SK-N-SH (cell line): ENCODE measurements at regions of chr3 and their contacts with region 1.

Region 1: GRCh38 chr3:114179575-114179974 is 723 bp upstream of the DRD3 start:
- DNase-seq: peak; percentile 42
- H3K4me3 ChIP-seq: no peak overlapping the region
- H3K27ac ChIP-seq: no peak overlapping the region
- H3K4me1 ChIP-seq: no peaks in the 10 kb centered on the region; a peak in 1 of 4 replicates
- H3K27me3 ChIP-seq: no peaks in the 10 kb centered on the region; the same call in 1 of the 2 replicates
- CTCF ChIP-seq: peak; percentile 48
- EP300 ChIP-seq: no peak
- RAD21 ChIP-seq: peak; percentile 62

Region 2: DNA sequence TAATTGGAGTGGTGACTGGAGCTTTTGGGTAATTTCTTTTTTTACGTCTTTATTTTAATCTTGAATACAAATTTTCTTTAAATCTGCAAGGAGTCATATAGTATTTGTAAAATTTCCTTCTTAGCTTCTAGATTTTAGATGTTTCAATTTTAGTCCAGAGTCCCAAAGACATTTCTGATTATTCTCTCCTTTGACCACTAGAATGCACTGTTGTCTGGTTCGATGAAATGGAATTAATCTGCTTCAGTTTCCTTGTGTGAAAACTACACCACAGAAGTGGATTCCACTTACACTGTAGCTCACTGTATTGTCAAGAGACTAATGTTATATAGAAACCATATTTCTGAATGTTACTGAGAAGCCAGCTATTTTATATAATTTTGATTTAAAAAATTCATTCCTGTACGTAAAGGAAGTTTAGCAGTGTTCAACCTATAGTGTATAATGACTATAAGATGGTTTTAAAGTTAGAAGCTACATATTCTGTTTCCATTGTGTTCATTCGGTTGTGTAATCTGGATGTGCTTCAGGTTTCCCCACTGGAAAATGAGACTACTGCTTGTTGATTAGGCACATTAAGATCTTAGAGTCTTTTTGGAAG is 334.9 kb before region 1 on chr3:
- CTCF ChIA-PET with region 1: interaction called, 10 read pairs
- POLR2A ChIA-PET with region 1: no interaction called
- DNase-seq: peak; percentile 47
- H3K4me3 ChIP-seq: peak overlapping the region in 1 of 2 experiments; percentile 17; a peak in 1 of 4 replicates
- H3K27ac ChIP-seq: no peak overlapping the region
- H3K4me1 ChIP-seq: no peaks in the 10 kb centered on the region
- H3K27me3 ChIP-seq: no peaks in the 10 kb centered on the region
- CTCF ChIP-seq: peak; percentile 75
- EP300 ChIP-seq: no peak
- RAD21 ChIP-seq: peak; percentile 72

Region 3: DNA sequence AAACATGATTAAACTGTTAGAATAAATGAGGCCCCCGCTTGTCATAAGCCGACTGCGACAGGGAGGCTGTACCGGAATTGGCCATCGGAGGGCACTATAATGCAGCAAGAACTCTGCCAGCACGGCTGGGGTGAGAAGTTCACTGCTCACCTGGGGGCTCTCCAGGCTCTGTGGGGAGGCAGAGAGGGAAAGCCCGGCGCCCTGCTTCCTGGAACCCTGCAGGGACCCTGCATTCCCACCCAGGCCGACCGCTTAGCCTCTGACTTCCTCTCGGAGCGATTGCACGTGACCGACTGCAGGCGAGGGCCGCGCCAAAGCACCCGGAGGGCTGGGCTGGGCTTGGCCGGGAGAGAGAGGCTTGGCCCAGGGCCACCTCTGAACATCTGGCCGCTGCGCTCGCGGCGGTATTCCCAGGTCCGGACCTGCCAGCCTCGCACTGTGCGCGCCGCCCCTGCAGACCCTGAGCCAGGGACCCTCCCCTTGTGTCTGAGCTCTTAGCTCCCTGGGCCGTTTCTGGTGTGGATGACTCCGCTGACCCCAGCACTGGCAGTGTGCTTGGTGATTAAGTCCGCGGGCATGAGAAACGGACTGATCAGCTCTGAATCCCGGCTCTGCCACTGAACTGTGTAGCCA is 26.9 kb before region 1 on chr3:
- CTCF ChIA-PET with region 1: interaction called, 34 read pairs
- POLR2A ChIA-PET with region 1: no interaction called
- DNase-seq: peak; percentile 87
- H3K4me3 ChIP-seq: peak overlapping the region; percentile 53 to 64
- H3K27ac ChIP-seq: peak overlapping the region in 1 of 2 experiments; percentile 45; a peak in 1 of 4 replicates
- H3K4me1 ChIP-seq: peaks cover 0 to 5% of the 10 kb centered on the region in 2 experiments; a peak in 1 of 4 replicates
- H3K27me3 ChIP-seq: no peaks in the 10 kb centered on the region
- CTCF ChIP-seq: peak; percentile 97
- EP300 ChIP-seq: 0 out of 4 replicates have a peak, but pooled peaks of 1 of the 2 experiments have one; percentile 31
- RAD21 ChIP-seq: peak; percentile 87

Region 4: GRCh38 chr3:114332342-114333179 is 153.0 kb after region 1 on chr3:
- CTCF ChIA-PET with region 1: no interaction called
- POLR2A ChIA-PET with region 1: no interaction called
- DNase-seq: no peak
- H3K4me3 ChIP-seq: no peak overlapping the region
- H3K27ac ChIP-seq: no peak overlapping the region
- H3K4me1 ChIP-seq: no peaks in the 10 kb centered on the region; a peak in 1 of 4 replicates
- H3K27me3 ChIP-seq: no peaks in the 10 kb centered on the region
- CTCF ChIP-seq: no peak
- EP300 ChIP-seq: no peak
- RAD21 ChIP-seq: no peak